Naive thymus-derived CD4-positive, alpha-beta T cell (primary cell): ENCODE measurements at regions of chr2 and their contacts with region 1.

Region 1: DNA sequence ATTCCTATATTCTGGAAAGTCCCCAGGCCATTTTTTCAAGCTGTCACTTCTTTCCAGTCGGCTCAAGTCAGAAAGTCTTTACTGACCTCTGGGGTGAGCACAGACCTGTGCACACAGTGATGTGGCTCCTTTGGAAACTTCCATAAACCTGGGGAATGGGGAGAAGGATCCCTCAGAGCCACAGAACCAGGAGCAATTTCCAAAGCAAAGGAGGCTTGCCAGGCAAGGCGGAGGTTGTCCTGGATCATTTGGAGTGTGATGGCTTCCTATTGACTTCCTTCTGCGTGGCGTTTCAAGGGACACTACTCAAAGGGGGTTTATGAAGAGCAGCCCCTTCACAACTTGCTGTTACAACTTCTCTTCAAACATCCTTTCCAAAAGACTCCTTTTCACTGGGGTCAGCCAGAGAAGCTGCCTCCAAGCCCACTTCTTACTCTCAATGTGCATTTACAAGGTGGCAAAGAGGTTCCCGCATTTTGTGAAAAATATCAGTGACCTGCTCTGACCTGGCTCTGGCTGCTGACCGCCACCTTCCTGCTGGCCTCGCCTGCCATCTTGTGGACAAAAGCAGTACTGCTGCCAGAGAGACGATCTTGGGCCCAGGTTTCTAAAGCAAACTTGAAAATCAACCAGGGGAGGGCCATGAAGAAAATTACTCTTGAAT is 18.2 kb upstream of the TMEM247 start:
- DNase-seq: peak; percentile 29 to 80 (median 60)
- ATAC-seq: peak; percentile 74
- H3K4me3 ChIP-seq: no peak overlapping the region
- H3K4me3 Mint-ChIP-seq: no peak overlapping the region
- H3K27ac ChIP-seq: no peak overlapping the region
- H3K27ac Mint-ChIP-seq: peak overlapping the region in 1 of 9 donors; percentile 7
- H3K4me1 ChIP-seq: no peaks in the 10 kb centered on the region
- H3K4me1 Mint-ChIP-seq: peaks cover 0 to 12% (median 8%) of the 10 kb centered on the region in 7 donors
- H3K27me3 ChIP-seq: no peaks in the 10 kb centered on the region
- H3K27me3 Mint-ChIP-seq: peaks cover 0 to 5% (median 0%) of the 10 kb centered on the region in 5 donors

Region 2: DNA sequence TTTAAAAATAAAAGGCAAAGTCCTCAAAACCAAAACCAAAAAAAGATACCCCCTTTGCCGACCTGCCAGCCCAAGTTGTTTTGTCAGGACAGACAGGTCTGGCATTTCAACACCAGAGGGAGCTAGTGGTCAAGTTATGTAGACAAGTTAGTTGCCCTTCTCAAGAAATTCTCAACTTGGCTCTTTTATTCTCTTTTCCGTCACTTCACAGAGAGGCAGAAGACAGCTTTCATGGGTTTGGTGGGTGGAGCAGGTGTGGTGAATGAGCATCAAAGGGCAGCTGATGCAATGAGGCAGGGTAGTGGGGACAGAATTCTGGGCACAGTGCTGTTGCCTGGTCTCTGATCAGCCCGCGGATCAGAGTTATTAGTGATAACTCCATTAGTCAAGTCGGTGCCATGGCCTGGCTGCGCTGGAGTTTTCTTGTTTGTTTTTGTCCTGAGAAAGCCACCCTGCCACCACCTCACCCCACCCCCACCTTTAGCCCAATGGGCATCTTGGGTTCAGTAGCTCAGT is 467.6 kb before region 1 on chr2:
- CTCF ChIA-PET with region 1: interaction called, 7 read pairs
- POLR2A ChIA-PET with region 1: no interaction called
- intact Hi-C with region 1: loop called (anchors 1 kb)
- DNase-seq: peak in 8 of 9 donors; percentile 46 to 75 (median 64)
- ATAC-seq: peak; percentile 75
- H3K4me3 ChIP-seq: no peak overlapping the region
- H3K4me3 Mint-ChIP-seq: no peak overlapping the region
- H3K27ac ChIP-seq: no peak overlapping the region
- H3K27ac Mint-ChIP-seq: peak overlapping the region in 1 of 9 donors; percentile 36
- H3K4me1 ChIP-seq: no peaks in the 10 kb centered on the region
- H3K4me1 Mint-ChIP-seq: peaks cover 0 to 10% (median 6%) of the 10 kb centered on the region in 7 donors
- H3K27me3 ChIP-seq: no peaks in the 10 kb centered on the region
- H3K27me3 Mint-ChIP-seq: peaks cover 0 to 3% (median 0%) of the 10 kb centered on the region in 5 donors

Region 3: GRCh38 chr2:46010925-46011490 is 450.1 kb before region 1 on chr2:
- CTCF ChIA-PET with region 1: interaction called, 5 read pairs
- POLR2A ChIA-PET with region 1: no interaction called
- intact Hi-C with region 1: loop called (anchors 1 kb)
- DNase-seq: peak in 6 of 9 donors; percentile 10 to 38 (median 26)
- ATAC-seq: no peak
- H3K4me3 ChIP-seq: no peak overlapping the region
- H3K4me3 Mint-ChIP-seq: no peak overlapping the region
- H3K27ac ChIP-seq: no peak overlapping the region
- H3K27ac Mint-ChIP-seq: no peak overlapping the region
- H3K4me1 ChIP-seq: no peaks in the 10 kb centered on the region
- H3K4me1 Mint-ChIP-seq: peaks cover 0 to 16% (median 0%) of the 10 kb centered on the region in 7 donors
- H3K27me3 ChIP-seq: no peaks in the 10 kb centered on the region
- H3K27me3 Mint-ChIP-seq: no peaks in the 10 kb centered on the region

Region 4: GRCh38 chr2:46050489-46050888 is 410.7 kb before region 1 on chr2:
- CTCF ChIA-PET with region 1: interaction called, 12 read pairs
- POLR2A ChIA-PET with region 1: no interaction called
- intact Hi-C with region 1: no loop called
- DNase-seq: no peak
- ATAC-seq: no peak
- H3K4me3 ChIP-seq: no peak overlapping the region
- H3K4me3 Mint-ChIP-seq: no peak overlapping the region
- H3K27ac ChIP-seq: no peak overlapping the region
- H3K27ac Mint-ChIP-seq: no peak overlapping the region
- H3K4me1 ChIP-seq: no peaks in the 10 kb centered on the region
- H3K4me1 Mint-ChIP-seq: peaks cover 0 to 20% (median 0%) of the 10 kb centered on the region in 7 donors
- H3K27me3 ChIP-seq: no peaks in the 10 kb centered on the region
- H3K27me3 Mint-ChIP-seq: no peaks in the 10 kb centered on the region

Region 5: DNA sequence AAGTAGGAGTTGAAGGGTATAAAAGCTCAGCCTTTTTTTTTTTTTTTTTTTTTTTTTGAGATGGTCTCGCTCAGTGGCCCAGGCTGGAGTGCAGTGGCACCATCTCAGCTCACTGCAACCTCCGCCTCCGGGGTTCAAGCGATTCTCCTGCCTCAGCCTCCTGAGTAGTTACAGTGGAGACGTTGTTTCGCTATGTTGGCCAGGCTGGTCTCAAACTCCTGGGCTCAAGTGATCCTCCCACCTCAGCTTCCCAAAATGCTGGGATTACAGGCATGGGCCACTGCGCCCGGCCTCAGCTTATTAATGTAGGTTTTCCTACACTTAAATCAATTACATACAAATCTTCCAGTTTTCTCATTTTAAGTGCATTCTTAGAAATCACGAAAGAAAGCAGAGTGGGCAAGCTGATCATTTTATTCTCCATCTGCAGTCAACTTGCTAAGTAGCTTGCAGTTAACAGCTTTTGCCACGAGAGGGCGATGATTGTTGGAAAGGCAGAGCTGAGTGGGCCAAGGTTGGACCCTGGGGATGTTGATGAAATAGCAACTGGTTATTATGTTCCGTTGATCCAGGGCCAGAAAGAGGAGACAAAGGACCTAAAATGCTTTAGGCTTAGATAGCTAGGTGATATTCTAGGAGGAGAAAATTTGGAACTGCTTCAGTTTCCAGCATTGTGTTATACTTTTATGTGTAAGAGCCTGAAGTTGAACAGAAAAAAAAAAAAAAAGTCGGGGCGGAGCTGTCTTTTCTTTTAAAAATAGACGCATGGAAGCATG is 398.3 kb before region 1 on chr2:
- CTCF ChIA-PET with region 1: interaction called, 12 read pairs
- POLR2A ChIA-PET with region 1: no interaction called
- intact Hi-C with region 1: loop called in 1 of 2 experiments (anchors 2 kb)
- DNase-seq: peak; percentile 14 to 63 (median 50)
- ATAC-seq: peak; percentile 73
- H3K4me3 ChIP-seq: no peak overlapping the region
- H3K4me3 Mint-ChIP-seq: no peak overlapping the region
- H3K27ac ChIP-seq: no peak overlapping the region
- H3K27ac Mint-ChIP-seq: no peak overlapping the region
- H3K4me1 ChIP-seq: peaks cover 0 to 4% of the 10 kb centered on the region in 2 donors
- H3K4me1 Mint-ChIP-seq: peaks cover 0 to 18% (median 0%) of the 10 kb centered on the region in 7 donors
- H3K27me3 ChIP-seq: no peaks in the 10 kb centered on the region
- H3K27me3 Mint-ChIP-seq: peaks cover 0 to 2% (median 0%) of the 10 kb centered on the region in 5 donors

Region 6: DNA sequence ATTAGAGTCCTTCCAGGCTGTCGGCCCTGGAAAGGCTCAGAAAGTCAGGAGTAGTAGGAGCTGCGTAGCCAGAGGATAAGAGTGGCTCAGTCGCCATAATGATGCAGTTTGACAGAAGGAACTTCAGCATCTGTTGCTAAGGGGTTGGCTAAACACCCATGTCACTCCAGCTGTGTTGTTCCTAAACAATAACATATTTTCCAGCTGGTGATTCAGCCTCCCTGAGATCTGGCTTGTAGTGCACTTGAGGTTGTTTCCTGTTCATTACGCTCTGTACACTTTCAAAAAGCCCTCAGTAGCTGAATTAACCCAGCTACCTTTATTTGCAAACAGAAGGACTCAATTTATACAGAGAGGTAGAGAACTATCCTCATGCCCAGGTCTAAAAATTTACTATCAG is 203.7 kb before region 1 on chr2:
- CTCF ChIA-PET with region 1: no interaction called
- POLR2A ChIA-PET with region 1: no interaction called
- intact Hi-C with region 1: no loop called
- DNase-seq: no peak
- ATAC-seq: no peak
- H3K4me3 ChIP-seq: no peak overlapping the region
- H3K4me3 Mint-ChIP-seq: no peak overlapping the region
- H3K27ac ChIP-seq: no peak overlapping the region
- H3K27ac Mint-ChIP-seq: no peak overlapping the region
- H3K4me1 ChIP-seq: no peaks in the 10 kb centered on the region
- H3K4me1 Mint-ChIP-seq: peaks cover 0 to 4% (median 0%) of the 10 kb centered on the region in 7 donors
- H3K27me3 ChIP-seq: no peaks in the 10 kb centered on the region
- H3K27me3 Mint-ChIP-seq: peaks cover 0 to 14% (median 3%) of the 10 kb centered on the region in 5 donors

Region 7: GRCh38 chr2:46336283-46336959 is 124.7 kb before region 1 on chr2:
- CTCF ChIA-PET with region 1: interaction called, 6 read pairs
- POLR2A ChIA-PET with region 1: no interaction called
- intact Hi-C with region 1: loop called in 1 of 2 experiments (anchors 1 kb)
- DNase-seq: no peak
- ATAC-seq: no peak
- H3K4me3 ChIP-seq: no peak overlapping the region
- H3K4me3 Mint-ChIP-seq: peak overlapping the region in 1 of 10 donors; percentile 31
- H3K27ac ChIP-seq: no peak overlapping the region
- H3K27ac Mint-ChIP-seq: no peak overlapping the region
- H3K4me1 ChIP-seq: peaks cover 0 to 10% of the 10 kb centered on the region in 2 donors
- H3K4me1 Mint-ChIP-seq: peaks cover 6 to 36% (median 29%) of the 10 kb centered on the region in 7 donors
- H3K27me3 ChIP-seq: no peaks in the 10 kb centered on the region
- H3K27me3 Mint-ChIP-seq: peaks cover 0 to 19% (median 7%) of the 10 kb centered on the region in 5 donors

Region 8: DNA sequence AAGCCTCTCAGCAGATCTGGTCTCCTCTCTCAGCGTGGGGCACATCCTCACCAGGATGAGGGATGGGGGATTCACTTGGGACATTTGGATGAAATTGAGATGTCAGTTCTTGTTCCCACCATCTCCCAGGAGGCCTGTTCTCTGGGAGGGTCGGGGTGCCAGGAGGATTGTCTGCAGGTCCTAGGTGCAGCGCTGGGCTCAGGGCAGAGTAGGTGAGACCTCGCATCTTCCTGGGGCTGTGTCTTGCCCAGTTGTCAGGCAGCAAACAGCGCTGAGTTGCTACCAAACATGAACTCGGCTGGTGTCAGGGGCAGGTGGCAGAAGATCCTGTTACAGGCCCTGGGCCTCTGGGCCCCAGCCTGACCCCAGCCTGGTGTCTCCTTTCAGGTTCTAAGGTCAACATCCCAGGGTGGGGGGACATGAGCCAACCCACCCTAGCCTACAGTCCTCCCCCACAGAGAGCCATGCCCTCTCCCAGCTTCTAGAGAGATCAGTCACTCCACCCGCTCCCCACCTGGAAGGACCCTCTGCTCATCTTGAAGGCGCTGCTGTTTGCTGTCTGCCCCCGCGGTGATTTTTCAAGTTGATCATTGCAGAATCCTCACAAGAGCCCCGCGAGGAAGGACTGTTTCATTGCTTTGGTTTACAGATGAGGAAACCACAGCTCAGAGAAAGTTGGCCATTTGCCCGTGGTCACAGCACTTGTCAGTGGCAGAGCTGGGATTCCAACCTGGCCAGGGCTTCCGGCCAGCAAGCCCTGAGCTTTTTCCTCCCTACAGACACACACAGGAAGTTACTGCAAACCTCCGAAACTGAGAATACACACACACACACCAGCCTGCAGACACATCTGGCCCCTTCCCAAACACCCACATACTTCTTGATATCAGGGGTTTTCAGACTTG is 610.0 kb after region 1 on chr2:
- CTCF ChIA-PET with region 1: no interaction called
- POLR2A ChIA-PET with region 1: no interaction called
- intact Hi-C with region 1: no loop called
- DNase-seq: peak in 6 of 9 donors; percentile 16 to 44 (median 33)
- ATAC-seq: peak; percentile 24
- H3K4me3 ChIP-seq: no peak overlapping the region
- H3K4me3 Mint-ChIP-seq: peak overlapping the region; percentile 55 to 81 (median 66)
- H3K27ac ChIP-seq: peak overlapping the region; percentile 52
- H3K27ac Mint-ChIP-seq: peak overlapping the region; percentile 72 to 97 (median 92)
- H3K4me1 ChIP-seq: peaks cover 25 to 27% of the 10 kb centered on the region in 2 donors
- H3K4me1 Mint-ChIP-seq: peaks cover 25 to 47% (median 38%) of the 10 kb centered on the region in 7 donors
- H3K27me3 ChIP-seq: no peaks in the 10 kb centered on the region
- H3K27me3 Mint-ChIP-seq: no peaks in the 10 kb centered on the region